ENCODE measurements at regions of chr16 and their contacts with region 1.

Region 1: DNA sequence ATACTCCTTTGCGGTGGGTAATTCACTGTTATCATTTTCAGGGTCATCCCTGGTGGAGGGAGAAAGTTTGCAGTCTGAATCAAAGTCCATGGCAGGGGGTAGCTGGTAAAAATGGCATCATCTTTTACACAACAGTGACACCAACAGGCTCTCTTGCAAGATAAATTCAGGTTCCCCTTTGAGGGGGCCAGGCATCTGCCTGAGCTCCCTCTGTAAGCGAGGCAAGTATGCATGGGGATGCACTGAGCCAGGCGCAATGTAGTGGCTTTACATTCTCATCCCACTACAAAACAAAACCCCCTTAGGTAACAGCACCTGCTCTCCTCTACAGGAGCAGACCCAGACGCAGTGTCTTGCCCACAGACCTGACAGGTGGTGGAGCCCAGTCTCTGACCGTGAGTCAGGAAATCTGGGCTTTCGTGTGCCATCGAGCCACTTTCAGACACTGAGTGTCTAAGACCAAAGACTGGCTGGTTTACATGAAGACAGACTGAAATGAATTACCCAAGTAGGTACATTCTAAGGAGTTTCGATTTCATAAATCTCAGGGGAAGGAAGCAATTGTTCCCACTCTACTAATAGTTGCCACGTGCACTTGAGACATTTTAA is 17.7 kb downstream of the LITAFD start:
- DNase-seq: no peak
- ATAC-seq: peak in 1 of 8 donors; percentile 26
- H3K4me3 ChIP-seq: no peak overlapping the region
- H3K27ac ChIP-seq: no peak overlapping the region
- H3K4me1 ChIP-seq: no peaks in the 10 kb centered on the region
- H3K27me3 ChIP-seq: no peaks in the 10 kb centered on the region
- CTCF ChIP-seq: no peak

Region 2: DNA sequence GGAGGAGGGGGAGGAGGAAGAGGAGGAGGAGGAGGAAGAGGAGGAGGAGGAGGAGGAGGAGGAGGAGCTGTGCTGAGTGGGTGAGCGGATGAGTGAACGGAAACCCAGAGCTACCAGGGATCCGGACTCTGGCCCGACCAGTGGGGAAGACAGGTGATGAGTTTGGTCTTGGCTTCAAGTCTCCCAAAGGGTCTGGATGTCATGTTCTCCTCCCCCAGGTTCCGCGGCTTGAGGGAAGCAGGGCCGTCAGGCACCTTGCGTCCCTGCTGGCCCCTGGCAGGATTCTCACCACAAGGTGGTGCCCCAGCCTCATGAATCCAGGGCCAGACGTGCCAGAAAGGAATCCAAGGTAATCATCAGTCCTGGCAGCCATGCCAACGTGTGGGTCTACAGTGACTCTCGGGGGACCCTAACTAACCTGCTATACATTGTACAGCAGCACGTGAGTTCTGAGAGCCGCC is 238.9 kb before region 1 on chr16:
- intact Hi-C with region 1: loop called in 1 of 10 experiments (anchors 5 kb)
- DNase-seq: peak; percentile 24 to 40
- ATAC-seq: peak; percentile 49 to 90 (median 84)
- H3K4me3 ChIP-seq: no peak overlapping the region
- H3K27ac ChIP-seq: no peak overlapping the region
- H3K4me1 ChIP-seq: no peaks in the 10 kb centered on the region
- H3K27me3 ChIP-seq: no peaks in the 10 kb centered on the region
- CTCF ChIP-seq: peak in 8 of 9 donors; percentile 25 to 71 (median 64)